Heart left ventricle (tissue), 16 donors: ENCODE measurements at regions of chr3 and their contacts with region 1.

Region 1: DNA sequence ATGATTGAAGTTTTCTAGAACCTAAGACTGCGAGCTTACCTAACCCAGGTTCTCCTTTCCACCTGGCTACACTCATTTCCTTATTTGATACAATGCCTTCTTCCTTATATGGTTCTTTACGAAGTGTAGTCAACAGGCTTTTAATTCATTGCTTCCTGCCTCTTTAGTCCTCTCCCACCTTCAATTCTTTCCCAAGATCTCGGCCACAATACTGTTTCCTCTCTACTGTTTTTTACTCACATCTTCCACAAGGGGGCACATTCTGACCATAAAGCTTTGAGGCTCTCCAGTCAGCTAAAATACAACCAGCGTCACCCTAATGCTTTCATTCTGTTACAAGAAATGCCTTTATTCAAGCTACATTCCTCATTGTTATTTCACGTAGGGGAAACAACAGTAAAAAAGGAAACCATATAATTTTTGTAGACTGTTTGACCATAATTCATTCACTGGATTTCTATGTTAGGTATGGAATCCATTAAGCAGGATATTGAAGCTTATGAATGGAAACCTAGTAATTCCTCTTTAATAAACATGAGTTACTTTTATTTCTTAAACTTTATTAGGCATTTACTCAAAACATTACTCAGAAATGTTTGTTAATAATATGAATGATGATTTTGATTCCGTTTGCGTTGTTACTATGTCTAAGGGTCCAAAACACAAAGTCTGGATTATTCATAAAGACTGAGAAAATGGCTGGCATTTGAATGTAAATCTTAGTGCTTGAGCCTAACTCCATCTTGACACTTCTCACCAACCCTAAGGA is 29.5 kb upstream of the VEPH1 start:
- DNase-seq: peak in 1 of 5 donors; percentile 28
- ATAC-seq: peak; percentile 33 to 90 (median 82)
- H3K4me3 ChIP-seq: no peak overlapping the region
- H3K27ac ChIP-seq: peak overlapping the region in 1 of 12 donors; percentile 22
- H3K4me1 ChIP-seq: peaks cover 0 to 8% (median 0%) of the 10 kb centered on the region in 12 donors
- H3K27me3 ChIP-seq: no peaks in the 10 kb centered on the region
- CTCF ChIP-seq: peak; percentile 52 to 78 (median 64)
- POLR2A ChIP-seq: no peak

Region 2: DNA sequence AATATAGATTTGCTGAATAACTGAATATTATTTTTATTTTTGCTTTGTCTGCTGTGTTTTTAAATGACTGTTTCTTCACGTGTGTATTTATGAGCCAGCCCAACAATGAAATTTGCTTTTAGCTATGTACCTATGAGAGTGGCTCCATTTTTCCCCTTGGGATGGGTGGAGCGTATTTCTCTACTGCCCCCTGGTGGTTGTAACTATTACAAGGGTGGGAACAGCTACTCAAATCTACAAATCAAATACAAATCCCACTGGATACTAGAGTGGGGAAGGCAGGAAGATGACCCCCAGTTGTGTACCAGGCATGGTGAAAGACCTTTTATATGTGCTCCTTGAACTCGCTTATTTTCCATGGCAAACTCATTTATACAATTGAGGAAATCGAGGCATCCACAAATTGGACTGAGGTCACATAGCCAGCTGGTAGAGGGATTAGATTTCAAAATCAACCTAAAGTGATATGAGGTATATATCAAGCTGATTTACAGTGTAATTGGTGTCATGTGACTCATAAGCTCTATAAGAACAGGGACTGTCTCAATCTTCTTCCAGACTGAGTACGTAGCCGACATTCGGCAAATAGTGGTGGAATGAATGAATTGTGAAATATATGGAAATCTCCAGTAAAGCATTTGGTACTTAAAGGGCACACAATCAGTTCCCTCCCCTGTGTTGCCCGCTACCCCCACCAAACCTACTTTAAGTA is 40.0 kb after region 1 on chr3:
- intact Hi-C with region 1: loop called in 8 of 10 experiments (anchors 1 to 5 kb)
- DNase-seq: no peak
- ATAC-seq: peak in 2 of 4 donors; percentile 52 to 66
- H3K4me3 ChIP-seq: no peak overlapping the region
- H3K27ac ChIP-seq: no peak overlapping the region
- H3K4me1 ChIP-seq: peaks cover 0 to 5% (median 0%) of the 10 kb centered on the region in 12 donors
- H3K27me3 ChIP-seq: no peaks in the 10 kb centered on the region
- CTCF ChIP-seq: peak; percentile 42 to 76 (median 60)
- POLR2A ChIP-seq: no peak

Region 3: DNA sequence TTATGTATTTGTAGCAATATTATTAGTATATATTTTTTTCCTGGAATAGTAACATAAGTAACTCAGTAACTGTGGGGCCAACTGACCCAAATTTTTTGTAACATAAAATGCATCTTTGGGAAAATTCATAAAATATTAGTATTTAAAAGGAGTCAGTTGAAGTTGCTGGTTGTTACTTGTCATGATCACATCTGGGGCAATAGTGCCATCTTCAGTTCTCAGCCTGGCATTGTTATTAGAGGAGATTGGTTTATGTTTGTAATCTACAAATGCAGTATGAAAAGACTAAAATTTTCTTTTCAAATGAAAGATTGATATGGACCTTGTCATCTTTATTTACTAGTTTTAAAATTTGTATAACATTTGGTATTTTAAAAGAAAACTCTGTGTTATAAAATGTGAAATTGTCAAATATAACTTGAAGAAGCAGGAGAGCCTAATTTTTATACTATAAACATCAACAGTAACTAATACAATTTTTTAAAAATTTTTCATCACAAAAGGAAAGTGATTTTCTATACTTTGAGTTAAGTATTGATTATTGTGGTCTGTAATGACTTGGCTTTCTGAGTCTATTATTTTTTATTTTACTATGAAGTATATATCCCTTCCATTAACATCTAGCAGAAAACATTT is 999.5 kb after region 1 on chr3:
- intact Hi-C with region 1: loop called in 1 of 10 experiments (anchors 5 kb)
- DNase-seq: peak in 1 of 5 donors; percentile 10
- ATAC-seq: peak in 1 of 4 donors; percentile 55
- H3K4me3 ChIP-seq: no peak overlapping the region
- H3K27ac ChIP-seq: no peak overlapping the region
- H3K4me1 ChIP-seq: no peaks in the 10 kb centered on the region
- H3K27me3 ChIP-seq: no peaks in the 10 kb centered on the region
- CTCF ChIP-seq: peak; percentile 25 to 69 (median 56)
- POLR2A ChIP-seq: no peak